ENCODE measurements at regions of chr6 and their contacts with region 1.

Region 1: DNA sequence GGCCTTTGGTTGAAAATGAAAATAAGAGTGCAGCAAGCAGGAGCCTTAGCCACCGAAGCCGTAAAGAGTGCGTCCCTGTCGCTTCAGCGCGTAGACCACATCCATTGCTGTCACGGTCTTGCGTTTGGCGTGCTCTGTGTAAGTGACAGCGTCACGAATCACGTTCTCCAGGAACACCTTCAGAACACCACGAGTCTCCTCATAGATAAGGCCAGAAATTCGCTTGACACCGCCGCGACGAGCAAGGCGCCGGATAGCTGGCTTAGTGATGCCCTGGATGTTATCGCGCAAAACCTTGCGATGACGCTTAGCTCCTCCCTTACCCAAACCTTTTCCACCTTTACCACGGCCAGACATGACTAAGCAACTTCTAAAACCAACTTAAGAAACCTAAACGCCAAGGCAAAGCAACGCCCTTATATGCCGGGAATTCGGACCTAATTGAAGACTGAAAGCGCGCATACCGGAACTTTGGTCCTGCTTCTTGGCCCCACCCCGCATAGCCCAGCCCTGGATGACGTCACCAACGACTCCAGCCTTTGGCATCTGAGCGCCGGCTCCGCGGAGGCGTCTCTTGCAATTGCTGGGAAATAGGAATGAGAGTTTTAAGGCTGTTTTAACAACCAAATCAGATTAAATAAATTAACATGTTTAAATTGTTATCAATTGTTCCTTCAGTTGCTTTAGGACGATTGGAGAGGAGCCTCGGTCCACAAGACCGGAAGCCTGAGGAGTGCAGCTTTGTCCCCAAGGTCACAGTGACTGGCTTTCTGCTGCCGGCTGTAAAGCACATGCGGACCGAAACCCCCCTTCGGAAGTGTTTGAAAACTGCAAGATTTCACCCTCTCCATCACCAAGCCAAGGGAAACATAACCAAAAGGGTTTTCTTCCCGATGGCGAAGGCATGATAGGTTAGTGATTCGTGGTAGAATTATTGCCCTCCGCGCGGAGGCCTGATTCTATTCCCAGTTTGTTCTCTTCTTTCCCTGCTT is 79.6 kb upstream of the BTN3A2 start:
- DNase-seq: peak; percentile 98
- ATAC-seq: peak; percentile 80
- H3K4me3 Mint-ChIP-seq: peak overlapping the region; percentile 88
- H3K27ac Mint-ChIP-seq: peak overlapping the region; percentile 99
- H3K4me1 Mint-ChIP-seq: peaks cover 14% of the 10 kb centered on the region
- H3K27me3 Mint-ChIP-seq: peaks cover 3% of the 10 kb centered on the region

Region 2: GRCh38 chr6:25556516-25556915 is 728.9 kb before region 1 on chr6:
- CTCF ChIA-PET with region 1: no interaction called
- POLR2A ChIA-PET with region 1: no interaction called
- intact Hi-C with region 1: no loop called
- DNase-seq: peak; percentile 90
- ATAC-seq: peak; percentile 66
- H3K4me3 Mint-ChIP-seq: no peak overlapping the region
- H3K27ac Mint-ChIP-seq: no peak overlapping the region
- H3K4me1 Mint-ChIP-seq: peaks cover 2% of the 10 kb centered on the region
- H3K27me3 Mint-ChIP-seq: no peaks in the 10 kb centered on the region

Region 3: GRCh38 chr6:26204332-26205165 is 80.9 kb before region 1 on chr6:
- CTCF ChIA-PET with region 1: interaction called, 3 read pairs
- POLR2A ChIA-PET with region 1: interaction called, 6 read pairs
- intact Hi-C with region 1: loop called (anchors 1 to 2 kb)
- DNase-seq: peak; percentile 92
- ATAC-seq: peak; percentile 69
- H3K4me3 Mint-ChIP-seq: no peak overlapping the region
- H3K27ac Mint-ChIP-seq: no peak overlapping the region
- H3K4me1 Mint-ChIP-seq: peaks cover 20% of the 10 kb centered on the region
- H3K27me3 Mint-ChIP-seq: no peaks in the 10 kb centered on the region

Region 4: DNA sequence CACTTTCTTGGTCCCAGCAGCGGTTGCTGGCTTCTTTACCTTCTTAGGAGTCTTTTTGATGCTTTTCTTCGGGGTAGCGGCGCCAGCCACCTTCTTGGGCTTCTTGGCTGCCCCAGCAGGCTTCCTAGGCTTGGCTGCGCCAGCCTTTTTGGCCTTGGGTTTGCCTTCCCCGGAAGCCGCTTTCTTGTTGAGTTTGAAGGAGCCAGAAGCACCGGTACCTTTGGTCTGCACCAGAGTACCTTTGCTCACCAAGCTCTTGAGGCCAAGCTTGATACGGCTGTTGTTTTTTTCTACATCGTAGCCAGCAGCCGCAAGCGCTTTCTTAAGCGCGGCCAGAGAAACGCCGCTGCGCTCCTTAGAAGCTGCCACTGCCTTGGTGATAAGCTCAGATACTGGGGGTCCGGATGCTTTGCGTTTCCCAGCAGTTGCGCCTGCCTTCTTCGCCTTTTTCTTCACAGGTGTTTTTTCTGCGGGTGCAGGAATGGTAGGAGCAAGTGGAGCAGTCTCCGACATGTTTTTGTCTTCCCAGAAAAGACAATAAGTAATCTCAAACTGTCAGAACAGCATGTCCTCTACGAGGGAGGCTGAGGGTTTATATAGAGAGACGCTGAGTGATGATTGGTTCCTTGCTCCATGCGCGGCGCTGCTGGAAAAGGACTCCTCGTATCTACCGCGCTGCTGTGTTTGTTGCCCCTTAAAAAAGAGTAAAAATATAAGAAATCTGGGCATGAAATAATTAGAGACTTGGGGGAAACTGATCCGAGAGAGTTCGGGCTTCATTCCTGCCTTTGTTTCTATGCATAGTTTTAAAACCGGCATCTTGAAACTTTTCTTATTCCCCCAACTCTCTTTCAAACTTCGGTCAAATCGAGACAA is 50.8 kb before region 1 on chr6:
- CTCF ChIA-PET with region 1: no interaction called
- POLR2A ChIA-PET with region 1: interaction called, 21 read pairs
- intact Hi-C with region 1: loop called in 1 of 2 experiments (anchors 1 kb)
- DNase-seq: peak; percentile 81
- ATAC-seq: peak; percentile 73
- H3K4me3 Mint-ChIP-seq: peak overlapping the region; percentile 77
- H3K27ac Mint-ChIP-seq: peak overlapping the region; percentile 100
- H3K4me1 Mint-ChIP-seq: peaks cover 31% of the 10 kb centered on the region
- H3K27me3 Mint-ChIP-seq: peaks cover 2% of the 10 kb centered on the region

Region 5: DNA sequence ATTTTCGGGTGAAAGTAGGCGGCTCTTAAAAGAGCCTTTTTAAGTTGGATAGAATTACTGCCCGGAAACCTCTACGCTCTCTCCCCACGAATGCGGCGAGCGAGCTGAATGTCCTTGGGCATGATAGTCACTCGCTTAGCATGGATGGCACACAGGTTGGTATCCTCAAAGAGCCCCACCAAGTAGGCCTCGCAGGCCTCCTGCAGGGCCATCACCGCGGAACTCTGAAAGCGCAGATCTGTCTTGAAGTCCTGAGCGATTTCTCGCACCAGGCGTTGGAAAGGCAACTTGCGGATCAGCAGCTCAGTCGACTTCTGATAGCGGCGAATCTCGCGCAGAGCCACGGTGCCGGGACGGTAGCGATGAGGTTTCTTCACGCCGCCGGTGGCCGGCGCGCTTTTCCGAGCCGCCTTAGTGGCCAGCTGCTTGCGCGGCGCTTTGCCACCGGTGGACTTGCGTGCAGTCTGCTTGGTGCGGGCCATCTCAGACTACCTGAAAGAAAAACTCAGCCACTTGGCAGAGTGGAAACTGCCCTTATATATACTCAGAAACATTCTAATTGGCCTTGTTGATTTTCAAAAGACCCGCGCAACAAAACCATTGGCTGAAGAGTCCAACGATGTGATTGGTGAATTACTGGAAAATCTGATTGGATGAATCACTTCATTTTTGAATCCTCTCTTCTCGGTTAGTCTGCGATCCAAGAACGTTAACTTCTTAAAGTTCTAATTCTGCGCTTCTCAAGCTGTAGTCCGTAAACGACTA is 14.4 kb before region 1 on chr6:
- CTCF ChIA-PET with region 1: interaction called, 23 read pairs
- POLR2A ChIA-PET with region 1: interaction called, 107 read pairs
- intact Hi-C with region 1: loop called (anchors 1 kb)
- DNase-seq: peak; percentile 85
- ATAC-seq: peak; percentile 43
- H3K4me3 Mint-ChIP-seq: no peak overlapping the region
- H3K27ac Mint-ChIP-seq: no peak overlapping the region
- H3K4me1 Mint-ChIP-seq: peaks cover 23% of the 10 kb centered on the region
- H3K27me3 Mint-ChIP-seq: no peaks in the 10 kb centered on the region

Region 6: GRCh38 chr6:26322645-26323482 is 37.4 kb after region 1 on chr6:
- CTCF ChIA-PET with region 1: interaction called, 5 read pairs
- POLR2A ChIA-PET with region 1: interaction called, 4 read pairs
- intact Hi-C with region 1: loop called in 1 of 2 experiments (anchors 1 kb)
- DNase-seq: peak; percentile 77
- ATAC-seq: peak; percentile 66
- H3K4me3 Mint-ChIP-seq: peak overlapping the region; percentile 84
- H3K27ac Mint-ChIP-seq: peak overlapping the region; percentile 93
- H3K4me1 Mint-ChIP-seq: peaks cover 28% of the 10 kb centered on the region
- H3K27me3 Mint-ChIP-seq: peaks cover 5% of the 10 kb centered on the region

Region 7: GRCh38 chr6:26520088-26520852 is 234.8 kb after region 1 on chr6:
- CTCF ChIA-PET with region 1: no interaction called
- POLR2A ChIA-PET with region 1: no interaction called
- intact Hi-C with region 1: no loop called
- DNase-seq: no peak
- ATAC-seq: peak; percentile 13
- H3K4me3 Mint-ChIP-seq: peak overlapping the region; percentile 85
- H3K27ac Mint-ChIP-seq: peak overlapping the region; percentile 83
- H3K4me1 Mint-ChIP-seq: peaks cover 24% of the 10 kb centered on the region
- H3K27me3 Mint-ChIP-seq: no peaks in the 10 kb centered on the region

Region 8: DNA sequence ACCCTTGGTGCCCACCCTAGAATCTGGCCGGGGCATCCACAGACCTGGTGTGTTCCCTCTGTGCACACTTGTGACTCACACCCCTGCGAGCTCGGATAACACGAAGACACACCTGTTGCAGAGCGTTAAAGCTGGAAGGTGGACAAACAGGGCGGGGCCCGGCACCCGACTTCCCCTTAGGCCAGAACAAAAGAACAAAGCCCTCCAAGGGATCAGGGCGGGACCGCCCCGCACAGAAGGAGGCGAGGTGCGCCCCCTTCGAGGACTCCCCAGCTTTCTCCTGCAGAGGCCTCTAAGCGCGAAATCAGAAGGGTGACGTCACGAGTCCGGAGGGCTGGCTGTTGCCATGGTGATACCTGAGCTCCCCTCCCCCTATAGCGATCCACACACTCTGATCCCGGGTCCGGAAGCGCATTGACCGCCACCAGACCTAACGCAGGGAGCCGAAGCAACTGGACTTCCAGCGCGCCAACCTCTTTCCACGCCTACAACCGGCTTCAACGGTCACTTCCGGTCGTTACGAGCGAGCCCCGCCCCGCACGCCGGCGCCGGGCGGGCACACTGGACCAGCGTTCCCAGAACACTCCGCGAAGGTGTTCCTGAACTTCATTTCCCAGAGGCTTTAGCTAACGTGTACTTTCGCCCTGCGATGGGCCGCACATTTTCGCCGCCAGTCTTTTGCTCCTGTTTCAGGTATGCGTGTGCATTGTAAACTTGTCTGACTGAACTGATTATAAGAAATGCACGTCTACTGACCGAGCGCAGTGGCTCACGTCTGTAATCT is 1187.4 kb after region 1 on chr6 and contains the start of gene ZNF184:
- CTCF ChIA-PET with region 1: no interaction called
- POLR2A ChIA-PET with region 1: no interaction called
- intact Hi-C with region 1: loop called in 1 of 2 experiments (anchors 10 kb)
- DNase-seq: peak; percentile 91
- ATAC-seq: peak; percentile 83
- H3K4me3 Mint-ChIP-seq: peak within 1 kb of the TSS; percentile 84
- H3K27ac Mint-ChIP-seq: peak within 1 kb of the TSS; percentile 97
- H3K4me1 Mint-ChIP-seq: peaks cover 44% of the 10 kb centered on the region
- H3K27me3 Mint-ChIP-seq: no peaks in the 10 kb centered on the region
- total RNA-seq, gene ZNF184: 11.8 to 14.5 TPM

Measured in activated CD4-positive, alpha-beta T cell treated with anti-CD3 and anti-CD28 coated beads for 36 hours (primary cell).